ENCODE measurements at regions of chr19 and their contacts with region 1.

Region 1: GRCh38 chr19:2391118-2391725 is 31.2 kb downstream of the TMPRSS9 start:
- DNase-seq: no peak
- H3K4me3 ChIP-seq: no peak overlapping the region
- H3K27ac ChIP-seq: no peak overlapping the region
- H3K4me1 ChIP-seq: peaks cover 0 to 16% (median 12%) of the 10 kb centered on the region in 4 donors
- H3K27me3 ChIP-seq: peaks cover 4% of the 10 kb centered on the region
- CTCF ChIP-seq: peak; percentile 74 to 88 (median 82)
- EP300 ChIP-seq: no peak
- POLR2A ChIP-seq: no peak

Region 2: GRCh38 chr19:2274931-2275535 is 116.2 kb before region 1 on chr19:
- in situ Hi-C with region 1: loop called in 2 of 4 experiments (anchors 25 kb)
- intact Hi-C with region 1: no loop called
- DNase-seq: peak; percentile 80
- H3K4me3 ChIP-seq: no peak overlapping the region
- H3K27ac ChIP-seq: peak overlapping the region; percentile 53 to 69 (median 62)
- H3K4me1 ChIP-seq: peaks cover 38 to 69% (median 55%) of the 10 kb centered on the region in 4 donors
- H3K27me3 ChIP-seq: no peaks in the 10 kb centered on the region
- CTCF ChIP-seq: peak; percentile 51 to 79 (median 64)
- EP300 ChIP-seq: no peak
- POLR2A ChIP-seq: no peak

Region 3: DNA sequence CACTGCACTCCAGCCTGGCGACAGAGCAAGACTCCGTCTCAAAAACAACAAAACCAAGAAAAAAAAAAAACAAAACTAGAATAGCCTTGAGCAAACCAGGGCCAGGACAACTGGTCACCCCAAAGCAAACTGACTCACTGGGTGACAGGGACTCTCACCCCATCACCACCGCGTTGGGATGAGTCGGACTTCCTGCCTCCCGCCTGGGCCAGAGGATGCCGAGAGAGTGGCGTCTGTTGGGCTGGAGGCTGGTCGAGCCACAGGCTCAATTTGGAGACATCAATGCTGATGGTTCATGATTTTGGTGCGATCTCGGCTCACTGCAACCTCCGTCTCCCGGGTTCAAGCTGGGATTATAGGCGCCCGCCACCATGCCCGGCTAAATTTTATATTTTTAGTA is 19.6 kb before region 1 on chr19:
- in situ Hi-C with region 1: no loop called
- intact Hi-C with region 1: no loop called
- DNase-seq: no peak
- H3K4me3 ChIP-seq: no peak overlapping the region
- H3K27ac ChIP-seq: no peak overlapping the region
- H3K4me1 ChIP-seq: no peaks in the 10 kb centered on the region
- H3K27me3 ChIP-seq: peaks cover 21% of the 10 kb centered on the region
- CTCF ChIP-seq: no peak
- EP300 ChIP-seq: no peak
- POLR2A ChIP-seq: no peak

Region 4: GRCh38 chr19:2648528-2648937 is 257.3 kb after region 1 on chr19:
- in situ Hi-C with region 1: no loop called
- intact Hi-C with region 1: no loop called
- DNase-seq: peak; percentile 86
- H3K4me3 ChIP-seq: no peak overlapping the region
- H3K27ac ChIP-seq: no peak overlapping the region
- H3K4me1 ChIP-seq: no peaks in the 10 kb centered on the region
- H3K27me3 ChIP-seq: no peaks in the 10 kb centered on the region
- CTCF ChIP-seq: peak; percentile 82 to 96 (median 83)
- EP300 ChIP-seq: no peak
- POLR2A ChIP-seq: no peak

Measured in transverse colon (tissue), 4 donors.